Dorsolateral prefrontal cortex (tissue), 120 donors: ENCODE measurements at regions of chr1 and their contacts with region 1.

Region 1: GRCh38 chr1:236523701-236524141 is at the start of gene LGALS8:
- DNase-seq: peak; percentile 75 to 94 (median 87)
- H3K4me3 ChIP-seq: peak within 1 kb of the TSS; percentile 66 to 100 (median 95)
- H3K27ac ChIP-seq: peak within 1 kb of the TSS in 58 of 59 donors; percentile 30 to 93 (median 80)
- H3K27me3 ChIP-seq: no peaks in the 10 kb centered on the region
- CTCF ChIP-seq: peak in 13 of 56 donors; percentile 9 to 30 (median 22)
- total RNA-seq, gene LGALS8: 33.6 to 99.3 (median 70.0) TPM

Region 2: GRCh38 chr1:236142253-236143103 is 381.2 kb before region 1 on chr1 and contains the start of gene GPR137B:
- intact Hi-C with region 1: loop called in 1 of 2 experiments (anchors 5 kb)
- DNase-seq: peak in 8 of 10 donors; percentile 48 to 81 (median 72)
- H3K4me3 ChIP-seq: peak within 1 kb of the TSS; percentile 49 to 93 (median 82)
- H3K27ac ChIP-seq: peak within 1 kb of the TSS in 52 of 59 donors; percentile 16 to 86 (median 64)
- H3K27me3 ChIP-seq: no peaks in the 10 kb centered on the region
- CTCF ChIP-seq: peak in 1 of 56 donors; percentile 9
- total RNA-seq, gene GPR137B: 21.7 to 63.1 (median 38.2) TPM

Region 3: DNA sequence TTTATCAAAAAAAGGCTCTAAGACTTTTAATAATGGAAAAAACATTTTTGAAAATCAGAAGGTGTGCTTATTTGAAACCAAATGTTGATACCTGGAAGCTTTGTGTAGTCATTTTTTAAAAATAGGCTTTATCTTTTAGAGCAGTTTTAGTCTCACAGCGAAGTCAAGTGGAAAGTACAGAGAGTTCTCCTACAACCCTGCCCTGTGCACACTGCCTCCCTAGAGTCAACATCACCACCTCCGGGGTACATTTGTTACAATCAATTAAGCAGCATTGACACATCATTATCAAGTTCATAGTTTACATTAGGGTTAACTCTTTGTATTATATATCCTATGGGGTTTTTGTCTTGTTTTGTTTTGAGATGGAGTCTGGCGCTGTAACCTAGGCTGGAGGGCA is 231.3 kb before region 1 on chr1:
- intact Hi-C with region 1: no loop called
- DNase-seq: no peak
- H3K4me3 ChIP-seq: no peak overlapping the region
- H3K27ac ChIP-seq: no peak overlapping the region
- H3K27me3 ChIP-seq: peaks cover 0 to 3% (median 0%) of the 10 kb centered on the region in 45 donors
- CTCF ChIP-seq: no peak